Breast epithelium (tissue), 4 donors: ENCODE measurements at regions of chr10 and their contacts with region 1.

Region 1: GRCh38 chr10:11403116-11403515 is 208.3 kb downstream of the USP6NL start:
- DNase-seq: no peak
- H3K4me3 ChIP-seq: no peak overlapping the region
- H3K27ac ChIP-seq: no peak overlapping the region
- H3K4me1 ChIP-seq: no peaks in the 10 kb centered on the region
- H3K27me3 ChIP-seq: no peaks in the 10 kb centered on the region
- CTCF ChIP-seq: no peak
- POLR2A ChIP-seq: no peak

Region 2: DNA sequence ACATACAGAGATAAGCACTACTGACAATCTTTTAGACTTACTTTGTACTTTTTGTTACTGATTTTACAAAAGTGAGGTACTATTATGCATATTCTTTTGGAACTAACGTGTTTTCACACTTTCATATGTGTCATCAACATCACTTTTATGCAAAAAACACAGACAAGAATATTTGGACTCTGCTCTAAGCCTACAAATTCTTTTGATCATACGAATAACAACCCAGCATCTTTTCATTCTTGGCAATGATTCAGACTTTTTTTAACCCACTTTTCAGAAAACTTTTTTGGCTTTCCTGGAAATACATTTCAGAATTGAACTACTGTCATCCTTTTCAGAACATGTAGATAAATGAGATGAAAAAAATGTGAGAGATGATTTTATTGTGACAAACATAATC is 178.1 kb after region 1 on chr10:
- intact Hi-C with region 1: loop called (anchors 5 kb)
- DNase-seq: no peak
- H3K4me3 ChIP-seq: no peak overlapping the region
- H3K27ac ChIP-seq: no peak overlapping the region
- H3K4me1 ChIP-seq: no peaks in the 10 kb centered on the region
- H3K27me3 ChIP-seq: no peaks in the 10 kb centered on the region
- CTCF ChIP-seq: no peak
- POLR2A ChIP-seq: no peak